ENCODE measurements at regions of chr10 and their contacts with region 1.

Region 1: GRCh38 chr10:80382989-80383388 is 25.4 kb upstream of the PRXL2A start:
- DNase-seq: peak in 1 of 2 experiments; percentile 49
- H3K4me3 ChIP-seq: no peak overlapping the region
- H3K27ac ChIP-seq: no peak overlapping the region
- H3K4me1 ChIP-seq: no peaks in the 10 kb centered on the region
- H3K27me3 ChIP-seq: no peaks in the 10 kb centered on the region
- CTCF ChIP-seq: peak in 2 of 3 experiments; percentile 58 to 78; a peak in 3 of 4 replicates
- EP300 ChIP-seq: no peak
- POLR2A ChIP-seq: no peak
- RAD21 ChIP-seq: peak; percentile 82 to 83

Region 2: DNA sequence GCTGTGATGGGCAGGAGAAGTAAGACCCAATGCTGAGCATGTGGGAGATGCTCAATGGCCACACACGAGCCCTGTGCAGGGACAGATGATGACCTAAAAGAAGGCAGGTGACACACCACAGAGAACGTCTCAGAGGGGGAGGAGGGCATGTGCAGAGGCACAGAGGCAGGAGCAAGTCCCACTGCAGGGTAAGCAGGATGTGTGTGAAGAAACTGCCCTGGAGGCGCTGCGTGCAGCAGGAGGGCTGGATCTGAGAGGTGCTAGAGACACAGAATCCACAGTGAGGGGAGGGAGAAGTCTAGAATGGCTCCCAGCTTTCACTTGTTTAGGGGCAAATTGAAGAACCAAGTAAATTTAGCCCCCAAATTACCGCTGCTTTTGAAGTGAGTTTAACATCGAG is 11.5 kb before region 1 on chr10:
- CTCF ChIA-PET with region 1: no interaction called
- POLR2A ChIA-PET with region 1: no interaction called
- DNase-seq: no peak
- H3K4me3 ChIP-seq: no peak overlapping the region
- H3K27ac ChIP-seq: no peak overlapping the region
- H3K4me1 ChIP-seq: no peaks in the 10 kb centered on the region
- H3K27me3 ChIP-seq: no peaks in the 10 kb centered on the region; a peak in 1 of 7 replicates
- CTCF ChIP-seq: no peak
- EP300 ChIP-seq: no peak
- POLR2A ChIP-seq: no peak
- RAD21 ChIP-seq: no peak

Region 3: DNA sequence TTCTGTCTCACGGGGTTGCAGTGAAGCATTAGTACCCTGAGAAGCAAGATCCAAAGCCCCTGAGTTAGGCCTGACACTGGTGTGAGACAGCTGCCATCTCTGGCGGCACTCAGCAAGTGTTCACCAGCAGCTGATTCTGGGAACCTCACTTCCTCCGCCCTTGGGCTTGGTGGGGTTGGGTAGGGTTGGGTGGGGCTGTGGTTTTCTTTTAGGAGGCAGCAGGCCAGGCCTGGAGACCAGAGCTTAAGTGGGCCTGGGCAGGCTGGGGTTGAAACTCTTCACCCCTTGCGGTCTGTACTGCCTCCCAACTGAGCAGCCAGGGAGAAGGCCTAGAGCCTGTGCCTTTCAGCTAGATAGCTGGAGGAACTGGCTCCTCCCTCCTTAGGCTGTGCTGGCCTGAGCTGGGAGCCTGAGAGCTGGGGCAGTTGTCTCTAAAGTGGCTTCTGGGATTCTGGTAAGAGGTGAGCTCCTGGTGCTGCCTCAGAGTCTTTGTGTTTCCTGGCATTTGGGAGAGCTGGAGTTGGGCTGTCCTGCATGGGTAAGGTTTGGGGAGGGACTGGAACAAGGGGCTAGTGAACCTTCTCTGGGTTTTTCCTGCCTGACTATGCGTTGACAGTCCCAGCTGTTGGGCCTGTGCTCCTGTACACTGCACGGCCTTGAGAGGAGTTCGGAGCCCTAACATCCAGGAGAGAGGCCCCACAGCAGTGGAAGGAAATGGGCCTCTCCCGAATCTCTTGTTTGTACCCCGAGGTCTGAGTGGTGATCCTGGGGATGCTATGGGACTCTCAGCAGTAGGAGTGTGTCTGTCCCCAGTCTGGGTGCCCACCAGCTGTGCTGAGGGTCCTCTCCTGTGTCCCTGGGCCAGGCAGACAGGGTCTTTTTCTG is 76.3 kb after region 1 on chr10:
- CTCF ChIA-PET with region 1: interaction called, 11 read pairs
- POLR2A ChIA-PET with region 1: no interaction called
- DNase-seq: no peak
- H3K4me3 ChIP-seq: no peak overlapping the region
- H3K27ac ChIP-seq: no peak overlapping the region
- H3K4me1 ChIP-seq: peaks cover 43 to 64% (median 55%) of the 10 kb centered on the region in 4 experiments
- H3K27me3 ChIP-seq: no peaks in the 10 kb centered on the region; a peak in 1 of 7 replicates
- CTCF ChIP-seq: peak in 1 of 3 experiments; percentile 8; a peak in 1 of 4 replicates
- EP300 ChIP-seq: no peak
- POLR2A ChIP-seq: no peak
- RAD21 ChIP-seq: no peak

Region 4: DNA sequence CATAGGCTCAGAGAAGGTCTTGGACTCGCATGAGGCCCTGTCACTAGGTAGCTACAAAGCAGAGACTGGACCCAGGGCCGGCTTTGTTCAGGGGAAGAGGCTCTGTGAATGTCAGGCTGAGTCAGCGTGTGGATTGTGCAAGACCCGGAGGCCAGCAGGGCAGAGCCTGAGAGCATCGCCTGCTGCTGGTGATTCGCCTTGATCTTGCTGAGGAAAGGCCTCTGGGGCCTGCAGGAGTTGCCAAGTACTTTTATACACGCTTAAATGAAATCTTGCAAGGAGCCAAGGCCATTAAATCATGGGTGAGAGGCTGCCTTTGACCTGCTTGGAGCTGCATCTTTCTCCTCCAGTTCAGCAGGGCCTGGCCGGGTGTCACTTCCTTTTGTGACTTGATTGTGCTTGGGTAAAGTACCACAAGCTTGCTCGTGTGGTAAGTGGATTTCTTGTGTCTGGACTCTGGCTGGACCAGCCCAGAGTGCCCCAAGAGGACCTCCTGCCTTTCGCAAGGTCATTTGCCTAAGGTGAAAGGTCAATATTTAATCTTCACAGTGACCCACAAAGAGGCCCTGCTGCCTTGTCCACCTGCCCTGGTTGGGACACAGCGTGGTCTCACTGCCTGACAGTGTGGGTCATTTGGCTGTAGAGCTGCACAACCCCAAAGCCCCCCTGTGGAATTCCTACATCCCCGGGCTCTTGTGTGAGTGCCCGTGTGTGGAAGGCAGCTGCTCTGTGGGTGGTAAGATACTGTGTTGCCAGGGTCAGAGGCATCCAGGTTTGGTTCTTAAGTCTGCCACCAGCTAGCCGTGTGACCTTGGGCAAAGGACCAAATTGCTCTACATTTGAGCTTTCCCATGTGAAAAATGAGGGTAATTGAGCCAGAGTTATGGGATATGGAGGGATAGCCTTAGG is 116.1 kb after region 1 on chr10:
- CTCF ChIA-PET with region 1: interaction called, 106 read pairs
- POLR2A ChIA-PET with region 1: no interaction called
- DNase-seq: no peak
- H3K4me3 ChIP-seq: no peak overlapping the region
- H3K27ac ChIP-seq: no peak overlapping the region
- H3K4me1 ChIP-seq: peaks cover 8 to 30% (median 15%) of the 10 kb centered on the region in 4 experiments
- H3K27me3 ChIP-seq: no peaks in the 10 kb centered on the region
- CTCF ChIP-seq: no peak
- EP300 ChIP-seq: no peak
- POLR2A ChIP-seq: no peak
- RAD21 ChIP-seq: no peak

Measured in H1 (cell line).